ENCODE measurements at regions of chr21 and their contacts with region 1.

Region 1: DNA sequence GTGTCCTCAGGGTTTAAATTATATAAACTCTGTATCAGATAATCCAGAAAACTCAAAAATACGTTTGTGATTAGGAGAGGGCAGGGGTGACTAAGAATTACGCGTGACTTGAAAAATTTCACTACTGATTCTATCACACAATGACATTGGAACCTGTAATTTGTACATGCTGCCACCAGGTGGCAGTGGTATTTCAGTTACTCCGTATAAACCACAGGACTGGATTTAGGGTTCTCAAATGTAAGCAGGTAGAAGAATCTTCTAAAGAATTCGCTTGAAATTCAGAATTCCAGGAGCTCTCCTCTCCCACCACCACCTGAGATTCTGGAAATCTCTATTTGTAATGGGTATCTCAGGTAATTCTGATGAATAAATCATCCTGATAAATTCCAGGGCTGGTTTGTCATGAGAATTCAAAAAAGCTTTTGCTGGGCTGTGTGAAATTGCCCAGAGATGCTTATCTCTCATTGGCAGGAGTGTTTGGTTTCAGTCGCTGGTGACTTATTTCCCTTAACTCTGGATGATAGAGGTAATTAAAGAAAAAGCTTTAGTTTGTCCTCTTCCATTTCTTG is 1.7 kb upstream of the KRTAP7-1 start:
- DNase-seq: peak; percentile 2
- ATAC-seq: no peak
- H3K4me3 ChIP-seq: no peak overlapping the region
- H3K27ac ChIP-seq: no peak overlapping the region
- H3K4me1 ChIP-seq: no peaks in the 10 kb centered on the region
- H3K27me3 ChIP-seq: no peaks in the 10 kb centered on the region
- CTCF ChIP-seq: peak; percentile 48; the same call in 1 of the 2 replicates
- EP300 ChIP-seq: no peak
- POLR2A ChIP-seq: no peak
- RAD21 ChIP-seq: no peak

Region 2: GRCh38 chr21:30842990-30843389 is 11.7 kb after region 1 on chr21:
- CTCF ChIA-PET with region 1: no interaction called
- POLR2A ChIA-PET with region 1: no interaction called
- in situ Hi-C with region 1: no loop called
- intact Hi-C with region 1: no loop called
- DNase-seq: no peak
- ATAC-seq: no peak
- H3K4me3 ChIP-seq: no peak overlapping the region
- H3K27ac ChIP-seq: no peak overlapping the region
- H3K4me1 ChIP-seq: no peaks in the 10 kb centered on the region
- H3K27me3 ChIP-seq: no peaks in the 10 kb centered on the region
- CTCF ChIP-seq: no peak
- EP300 ChIP-seq: no peak
- POLR2A ChIP-seq: no peak
- RAD21 ChIP-seq: no peak

Region 3: GRCh38 chr21:31088315-31088714 is 257.0 kb after region 1 on chr21:
- CTCF ChIA-PET with region 1: interaction called, 18 read pairs
- POLR2A ChIA-PET with region 1: no interaction called
- in situ Hi-C with region 1: no loop called
- intact Hi-C with region 1: no loop called
- DNase-seq: no peak
- ATAC-seq: no peak
- H3K4me3 ChIP-seq: no peak overlapping the region
- H3K27ac ChIP-seq: no peak overlapping the region
- H3K4me1 ChIP-seq: peaks cover 7% of the 10 kb centered on the region; the same call in 1 of the 2 replicates
- H3K27me3 ChIP-seq: no peaks in the 10 kb centered on the region
- CTCF ChIP-seq: no peak
- EP300 ChIP-seq: no peak
- POLR2A ChIP-seq: no peak
- RAD21 ChIP-seq: no peak